Endothelial cell of umbilical vein (primary cell): ENCODE measurements at regions of chr2 and their contacts with region 1.

Region 1: DNA sequence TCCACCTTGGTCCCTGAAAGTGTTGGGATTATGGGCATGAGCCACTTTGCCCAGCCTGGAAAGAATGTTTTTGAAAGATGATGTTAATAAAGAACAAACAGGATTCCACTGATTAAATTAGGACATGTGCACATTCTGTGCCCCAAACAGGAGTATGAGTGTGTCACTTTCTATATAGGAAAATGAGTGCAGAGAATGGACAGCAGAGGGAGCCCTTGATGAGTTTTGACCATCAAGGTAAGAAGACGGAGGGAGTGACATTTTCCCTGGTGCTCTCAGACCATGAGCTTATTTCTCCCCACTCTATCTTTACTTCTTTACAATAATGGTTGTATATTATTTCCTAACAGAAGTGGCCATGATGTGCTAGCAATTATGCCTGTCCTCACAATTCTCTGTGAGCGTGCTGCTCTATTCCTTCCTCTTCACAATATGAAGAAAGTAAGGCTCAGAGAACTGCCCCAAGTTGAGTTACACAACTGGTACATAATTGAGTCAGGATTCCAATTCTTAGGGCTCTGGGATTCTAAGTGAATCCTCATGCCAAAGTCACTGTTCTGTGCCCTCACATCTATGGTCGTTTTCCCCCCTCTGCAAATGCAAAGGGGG is 20.6 kb downstream of the RPL37A start:
- DNase-seq: peak; percentile 77
- H3K4me3 ChIP-seq: no peak overlapping the region
- H3K27ac ChIP-seq: no peak overlapping the region
- H3K4me1 ChIP-seq: no peaks in the 10 kb centered on the region
- H3K27me3 ChIP-seq: no peaks in the 10 kb centered on the region
- CTCF ChIP-seq: peak; percentile 64 to 66
- POLR2A ChIP-seq: no peak

Region 2: DNA sequence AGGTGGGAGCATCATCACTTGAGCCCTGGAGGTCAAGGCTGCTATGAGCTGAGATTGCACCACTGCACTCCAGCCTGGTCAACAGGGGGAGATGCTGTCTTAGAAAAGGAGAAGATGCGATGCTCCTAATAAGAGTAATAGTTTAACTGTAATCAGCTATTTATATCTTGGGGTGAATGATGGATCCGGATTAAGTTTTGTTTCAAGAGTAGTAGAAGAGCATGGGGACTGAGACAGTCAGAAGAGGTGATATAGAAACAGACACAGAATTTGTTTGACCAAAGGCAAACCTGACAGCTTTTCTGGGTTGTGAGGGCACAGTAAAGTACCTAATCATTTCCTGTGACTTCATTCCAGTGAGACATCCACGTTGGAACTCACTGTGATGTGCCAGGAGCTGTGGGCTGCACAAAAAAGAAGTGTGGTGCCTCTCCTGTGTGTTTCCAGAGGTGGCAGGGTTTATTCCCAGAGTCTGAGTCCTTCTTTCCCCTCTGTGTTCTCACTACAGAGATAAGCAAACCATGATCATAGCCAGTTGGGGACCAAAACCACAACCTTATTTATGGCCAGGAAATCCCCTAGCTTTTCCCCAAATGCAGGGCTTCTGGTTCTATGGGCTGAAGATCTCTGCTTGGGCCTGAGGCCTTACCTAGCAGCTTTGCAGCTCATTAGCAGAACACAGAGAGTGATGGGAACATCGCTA is 296.5 kb before region 1 on chr2:
- CTCF ChIA-PET with region 1: no interaction called
- POLR2A ChIA-PET with region 1: no interaction called
- dilution Hi-C with region 1: no loop called
- intact Hi-C with region 1: loop called (anchors 5 kb)
- DNase-seq: peak; percentile 32
- H3K4me3 ChIP-seq: no peak overlapping the region
- H3K27ac ChIP-seq: no peak overlapping the region
- H3K4me1 ChIP-seq: peaks cover 30% of the 10 kb centered on the region
- H3K27me3 ChIP-seq: no peaks in the 10 kb centered on the region
- CTCF ChIP-seq: peak; percentile 9 to 26
- POLR2A ChIP-seq: no peak

Region 3: DNA sequence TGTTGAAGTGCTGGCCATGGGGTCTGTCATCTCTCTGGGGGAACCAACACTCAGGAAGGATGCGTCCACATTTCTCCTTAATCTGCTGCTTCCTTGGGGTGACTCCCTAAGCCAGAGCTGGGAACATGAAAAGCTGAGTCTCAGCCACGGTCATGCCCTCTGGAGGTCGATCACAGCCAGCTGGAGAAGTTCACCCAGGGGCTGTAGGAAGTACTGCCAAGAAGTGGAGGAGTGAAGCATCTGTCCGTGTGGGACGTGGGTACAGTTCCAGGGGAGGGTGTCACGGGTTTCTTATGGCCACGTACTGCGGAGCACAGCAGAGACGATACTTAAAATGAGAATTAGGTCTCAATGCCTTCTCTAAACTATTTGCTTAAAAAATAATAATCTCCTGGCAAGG is 71.5 kb after region 1 on chr2:
- CTCF ChIA-PET with region 1: interaction called, 10 read pairs
- POLR2A ChIA-PET with region 1: no interaction called
- dilution Hi-C with region 1: no loop called
- intact Hi-C with region 1: no loop called
- DNase-seq: no peak
- H3K4me3 ChIP-seq: no peak overlapping the region
- H3K27ac ChIP-seq: no peak overlapping the region
- H3K4me1 ChIP-seq: no peaks in the 10 kb centered on the region
- H3K27me3 ChIP-seq: peaks cover 0 to 1% of the 10 kb centered on the region in 2 experiments
- CTCF ChIP-seq: no peak
- POLR2A ChIP-seq: no peak

Region 4: GRCh38 chr2:216632952-216633615 is 113.8 kb after region 1 on chr2 and contains the start of gene IGFBP2:
- CTCF ChIA-PET with region 1: interaction called, 20 read pairs
- POLR2A ChIA-PET with region 1: no interaction called
- dilution Hi-C with region 1: no loop called
- intact Hi-C with region 1: loop called (anchors 1 kb)
- DNase-seq: peak; percentile 56
- H3K4me3 ChIP-seq: peak within 1 kb of the TSS; percentile 52 to 79 (median 59)
- H3K27ac ChIP-seq: no peak within 1 kb of the TSS
- H3K4me1 ChIP-seq: peaks cover 30% of the 10 kb centered on the region
- H3K27me3 ChIP-seq: peaks cover 6 to 9% of the 10 kb centered on the region in 2 experiments
- CTCF ChIP-seq: no peak
- POLR2A ChIP-seq: no peak
- total RNA-seq, gene IGFBP2: 212 and 229 TPM in 2 replicates

Region 5: GRCh38 chr2:216666461-216667233 is 147.4 kb after region 1 on chr2:
- CTCF ChIA-PET with region 1: interaction called, 583 read pairs
- POLR2A ChIA-PET with region 1: no interaction called
- dilution Hi-C with region 1: no loop called
- intact Hi-C with region 1: loop called (anchors 1 kb)
- DNase-seq: peak; percentile 74
- H3K4me3 ChIP-seq: no peak overlapping the region
- H3K27ac ChIP-seq: no peak overlapping the region
- H3K4me1 ChIP-seq: peaks cover 8% of the 10 kb centered on the region
- H3K27me3 ChIP-seq: peaks cover 0 to 4% of the 10 kb centered on the region in 2 experiments
- CTCF ChIP-seq: peak; percentile 97 to 98
- POLR2A ChIP-seq: no peak

Region 6: DNA sequence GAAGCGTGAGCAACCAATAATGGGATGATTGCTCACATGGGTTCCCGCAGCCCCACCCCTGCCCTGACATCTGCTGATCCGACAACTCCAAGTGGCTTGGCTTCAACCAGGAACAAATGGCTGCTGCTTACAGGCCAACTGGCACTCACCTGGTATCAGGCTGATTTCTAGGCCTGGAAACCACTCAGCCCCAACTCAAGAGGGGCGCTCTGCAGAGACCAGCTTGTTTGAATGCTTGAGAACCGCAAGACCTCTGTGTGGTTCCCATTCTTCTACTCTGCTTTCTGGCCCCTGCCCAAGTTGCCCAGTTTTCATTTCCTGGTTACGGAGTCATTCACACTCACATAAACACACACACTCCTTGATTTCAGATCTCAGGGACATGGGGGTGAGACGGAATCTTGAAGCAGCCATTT is 288.6 kb after region 1 on chr2:
- CTCF ChIA-PET with region 1: no interaction called
- POLR2A ChIA-PET with region 1: no interaction called
- dilution Hi-C with region 1: no loop called
- intact Hi-C with region 1: no loop called
- DNase-seq: peak; percentile 13
- H3K4me3 ChIP-seq: no peak overlapping the region
- H3K27ac ChIP-seq: no peak overlapping the region
- H3K4me1 ChIP-seq: no peaks in the 10 kb centered on the region
- H3K27me3 ChIP-seq: no peaks in the 10 kb centered on the region
- CTCF ChIP-seq: no peak
- POLR2A ChIP-seq: no peak

Region 7: GRCh38 chr2:217756375-217757107 is 1237.3 kb after region 1 on chr2:
- CTCF ChIA-PET with region 1: interaction called, 8 read pairs
- POLR2A ChIA-PET with region 1: no interaction called
- dilution Hi-C with region 1: no loop called
- intact Hi-C with region 1: loop called (anchors 10 kb)
- DNase-seq: peak; percentile 42
- H3K4me3 ChIP-seq: no peak overlapping the region
- H3K27ac ChIP-seq: no peak overlapping the region
- H3K4me1 ChIP-seq: no peaks in the 10 kb centered on the region
- H3K27me3 ChIP-seq: peaks cover 3 to 4% of the 10 kb centered on the region in 2 experiments
- CTCF ChIP-seq: peak; percentile 89 to 93
- POLR2A ChIP-seq: no peak